A673 (cell line): ENCODE measurements at regions of chr4 and their contacts with region 1.

Region 1: GRCh38 chr4:2132438-2132837 is 73.3 kb downstream of the NAT8L start:
- DNase-seq: no peak
- H3K4me3 ChIP-seq: no peak overlapping the region
- H3K27ac ChIP-seq: no peak overlapping the region
- H3K4me1 ChIP-seq: no peaks in the 10 kb centered on the region
- H3K27me3 ChIP-seq: no peaks in the 10 kb centered on the region
- CTCF ChIP-seq: no peak

Region 2: DNA sequence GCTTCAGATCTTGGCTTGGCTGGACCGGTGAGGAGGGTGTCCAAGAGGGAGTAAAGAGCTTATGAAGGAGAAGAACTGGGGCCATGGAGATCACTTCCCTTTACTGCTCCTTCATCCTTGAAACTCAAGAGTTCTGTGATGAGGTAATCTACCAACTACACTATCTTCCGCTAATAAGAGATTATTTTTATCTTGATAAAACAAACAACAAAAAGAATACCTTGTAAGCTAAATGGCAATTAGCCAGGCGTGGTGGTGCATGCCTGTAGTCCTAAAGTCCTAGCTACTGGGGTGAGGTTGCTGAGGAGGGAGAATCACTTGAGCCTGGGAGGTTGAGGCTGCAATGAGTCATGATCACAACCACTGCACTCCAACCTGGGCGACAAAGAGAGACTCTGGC is 62.1 kb after region 1 on chr4:
- CTCF ChIA-PET with region 1: no interaction called
- POLR2A ChIA-PET with region 1: no interaction called
- intact Hi-C with region 1: loop called (anchors 2 kb)
- DNase-seq: no peak
- H3K4me3 ChIP-seq: no peak overlapping the region
- H3K27ac ChIP-seq: no peak overlapping the region
- H3K4me1 ChIP-seq: no peaks in the 10 kb centered on the region
- H3K27me3 ChIP-seq: no peaks in the 10 kb centered on the region
- CTCF ChIP-seq: no peak

Region 3: GRCh38 chr4:2424581-2424980 is 292.1 kb after region 1 on chr4:
- CTCF ChIA-PET with region 1: no interaction called
- POLR2A ChIA-PET with region 1: no interaction called
- intact Hi-C with region 1: no loop called
- DNase-seq: no peak
- H3K4me3 ChIP-seq: no peak overlapping the region
- H3K27ac ChIP-seq: no peak overlapping the region
- H3K4me1 ChIP-seq: no peaks in the 10 kb centered on the region
- H3K27me3 ChIP-seq: peaks cover 14% of the 10 kb centered on the region
- CTCF ChIP-seq: no peak